Right ventricle myocardium inferior (tissue), 1 donor: ENCODE measurements at regions of chr2 and their contacts with region 1.

Region 1: DNA sequence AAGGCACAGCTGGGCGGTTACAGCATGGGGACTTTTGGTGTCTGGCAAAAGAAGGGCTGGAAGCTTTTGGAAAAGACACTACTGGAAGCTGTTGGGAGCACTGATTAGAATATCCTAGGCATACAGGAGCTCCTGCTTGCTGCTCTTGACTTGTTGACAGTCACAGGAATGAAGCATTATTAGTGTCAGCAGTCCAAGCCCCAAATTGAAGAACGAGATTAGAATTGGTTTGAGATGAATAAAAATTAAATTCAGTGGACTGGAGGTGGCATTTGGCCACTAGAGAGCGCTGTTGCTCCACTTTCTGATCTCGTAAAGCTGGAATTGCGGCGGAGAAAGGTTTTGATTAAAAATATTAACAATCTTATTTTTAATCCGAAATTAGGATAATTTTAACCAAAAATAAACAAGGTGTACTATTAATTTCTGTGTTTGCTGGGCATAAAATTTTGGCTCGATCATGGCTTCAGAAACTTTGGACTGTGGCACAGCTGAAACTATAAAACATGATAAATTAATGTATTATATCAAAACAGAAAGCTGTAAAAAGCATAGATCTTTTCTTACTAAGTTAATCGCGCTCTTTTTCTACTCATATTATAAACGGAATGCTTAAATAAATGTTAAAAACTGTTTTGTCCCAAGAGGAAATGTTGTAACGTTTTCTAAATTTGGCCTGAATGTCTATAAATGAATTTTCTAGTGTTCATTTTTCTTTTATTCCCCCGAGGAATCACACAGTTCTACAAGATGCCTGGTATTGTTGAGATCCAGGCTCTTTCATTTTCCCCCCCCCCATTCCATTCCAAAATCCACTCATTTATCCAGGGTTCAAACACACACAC is 2.4 kb upstream of the HOXD8 start:
- DNase-seq: no peak
- ATAC-seq: no peak

Region 2: GRCh38 chr2:176063958-176064357 is 63.2 kb before region 1 on chr2:
- intact Hi-C with region 1: no loop called
- DNase-seq: no peak
- ATAC-seq: no peak

Region 3: DNA sequence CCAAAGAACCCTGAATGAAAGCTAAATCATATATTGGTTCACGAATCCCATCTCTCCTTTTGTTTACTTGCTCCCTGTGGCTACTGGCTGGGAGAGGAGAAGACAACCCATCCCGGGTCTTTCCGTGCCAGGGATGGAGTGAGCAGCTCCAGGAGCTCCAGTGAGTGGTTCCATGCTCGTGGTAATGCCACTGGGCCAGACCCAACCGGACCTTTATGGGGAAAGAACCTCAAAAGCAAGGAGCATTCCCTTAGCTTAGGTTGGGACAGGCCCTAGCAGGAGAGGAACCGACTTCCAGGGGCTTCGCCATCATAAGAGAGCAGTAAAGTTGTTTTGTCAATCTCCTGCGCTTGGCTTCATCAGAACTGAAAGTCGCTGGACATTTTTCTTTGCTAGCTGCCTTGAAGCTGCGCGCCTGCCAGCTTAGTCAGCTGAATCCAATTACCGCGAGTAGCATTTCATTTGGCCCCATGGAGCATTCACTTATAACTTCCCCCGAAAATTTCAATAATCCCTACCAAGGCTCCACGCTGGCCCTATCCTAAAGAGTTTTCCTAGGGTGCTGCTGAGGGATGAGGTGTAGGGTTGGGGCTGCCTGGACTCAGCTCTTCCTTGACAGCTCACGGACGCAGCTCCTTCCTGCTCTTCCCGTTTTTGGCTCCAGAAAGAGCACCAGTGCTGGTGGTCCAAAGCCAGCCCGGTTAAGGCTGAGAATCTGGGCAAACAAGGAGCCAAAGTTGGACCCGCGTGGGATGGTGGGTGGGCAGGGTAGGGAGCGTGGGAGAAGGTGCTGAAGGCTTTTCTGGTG is 34.9 kb after region 1 on chr2:
- intact Hi-C with region 1: no loop called
- DNase-seq: no peak
- ATAC-seq: no peak

Region 4: GRCh38 chr2:176638167-176639015 is 511.2 kb after region 1 on chr2:
- intact Hi-C with region 1: loop called (anchors 2 kb)
- DNase-seq: peak; percentile 76
- ATAC-seq: peak; percentile 91

Region 5: DNA sequence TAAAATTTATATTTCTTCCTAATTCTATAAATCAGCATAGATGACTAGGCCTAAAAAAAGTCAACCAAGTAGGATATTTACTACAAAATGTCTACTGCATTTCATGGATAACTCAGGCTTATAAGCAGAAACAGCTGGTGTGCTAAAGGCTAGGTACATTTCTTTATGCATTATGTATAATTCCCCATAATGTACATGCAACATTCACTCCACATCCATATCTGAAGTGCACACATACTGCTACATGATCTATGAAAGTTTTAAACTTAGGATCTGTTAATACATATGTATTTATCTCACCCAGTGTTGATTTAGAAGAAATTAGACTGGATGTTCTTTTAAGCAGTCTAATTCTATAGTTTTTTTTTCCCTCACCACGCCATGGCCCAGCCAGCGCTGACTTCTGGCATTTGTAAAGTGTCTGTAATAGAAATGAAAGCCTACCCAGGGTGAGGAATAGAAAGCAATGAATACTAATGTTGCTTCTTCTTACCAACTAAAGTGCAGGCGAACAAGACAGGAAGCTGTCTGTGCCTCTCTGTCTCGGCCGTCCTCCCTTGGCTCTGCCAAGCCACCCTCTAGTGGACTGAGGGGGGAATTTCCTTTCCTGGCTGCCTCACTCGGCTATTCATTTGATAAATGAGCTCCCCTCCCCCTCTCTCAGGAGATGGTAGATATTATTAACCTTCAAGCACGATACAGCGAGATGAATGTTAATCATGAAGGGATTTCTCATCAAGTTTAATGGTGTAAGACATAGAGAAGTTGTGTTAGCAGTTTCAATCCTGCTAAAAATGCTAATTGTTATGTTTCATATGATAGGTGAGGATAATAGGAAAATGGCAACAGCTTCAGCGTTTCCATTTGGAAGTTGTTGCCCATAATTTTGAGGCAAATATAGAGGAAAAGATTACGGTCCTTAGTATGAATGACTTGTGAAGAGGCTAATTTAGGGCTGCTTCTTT is 526.6 kb after region 1 on chr2:
- intact Hi-C with region 1: loop called (anchors 5 kb)
- DNase-seq: peak; percentile 57
- ATAC-seq: peak; percentile 88

Region 6: GRCh38 chr2:176814306-176815052 is 687.3 kb after region 1 on chr2:
- intact Hi-C with region 1: loop called (anchors 5 kb)
- DNase-seq: no peak
- ATAC-seq: no peak

Region 7: GRCh38 chr2:177148477-177149154 is 1021.5 kb after region 1 on chr2:
- intact Hi-C with region 1: loop called (anchors 2 kb)
- DNase-seq: peak; percentile 81
- ATAC-seq: peak; percentile 72